Cardiac septum (tissue), 1 donor: ENCODE measurements at regions of chr7 and their contacts with region 1.

Region 1: GRCh38 chr7:36048141-36048901 is 104.7 kb upstream of the EEPD1 start:
- DNase-seq: no peak

Region 2: DNA sequence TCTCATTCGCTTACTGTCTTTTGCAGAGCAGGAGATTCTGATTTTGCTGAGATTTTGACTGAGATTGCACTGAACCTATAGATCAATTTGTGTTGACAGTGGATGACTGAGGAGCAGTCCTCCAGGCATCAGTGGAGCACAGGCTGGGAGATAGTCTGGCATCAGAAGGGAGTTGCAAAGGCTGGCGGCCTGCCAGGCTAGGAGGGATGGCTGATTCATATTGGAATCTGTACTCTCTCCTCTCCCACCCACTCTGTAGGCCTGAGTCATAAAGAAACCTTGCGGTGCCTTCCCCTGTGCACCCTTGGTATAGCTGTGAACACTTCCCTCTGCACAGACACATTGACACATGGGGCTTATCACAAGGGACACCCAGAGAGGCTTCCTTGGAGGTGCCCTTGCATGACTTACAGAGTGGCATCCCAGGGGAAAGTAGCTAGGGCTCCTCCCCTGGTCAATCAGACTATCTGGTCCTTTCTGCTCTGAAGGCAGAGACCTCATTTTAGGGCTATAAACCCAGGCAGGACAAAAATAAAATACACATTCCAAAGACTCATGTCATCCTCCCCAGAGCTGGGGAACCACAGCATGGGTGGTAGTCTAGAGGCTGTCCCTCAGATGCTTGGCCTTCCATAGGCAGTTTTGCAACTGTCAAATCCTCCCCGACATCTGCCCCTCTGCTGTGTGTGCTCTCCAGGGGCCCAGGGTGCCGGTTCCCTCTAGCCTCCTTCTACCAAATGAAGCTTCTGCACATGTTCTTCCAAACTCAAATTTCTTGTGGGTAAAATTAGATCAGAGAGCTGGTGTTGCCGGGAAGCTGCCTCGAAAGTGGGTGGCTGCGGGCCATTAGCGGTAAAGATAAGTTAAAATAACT is 67.4 kb after region 1 on chr7:
- intact Hi-C with region 1: loop called (anchors 2 kb)
- DNase-seq: no peak

Region 3: DNA sequence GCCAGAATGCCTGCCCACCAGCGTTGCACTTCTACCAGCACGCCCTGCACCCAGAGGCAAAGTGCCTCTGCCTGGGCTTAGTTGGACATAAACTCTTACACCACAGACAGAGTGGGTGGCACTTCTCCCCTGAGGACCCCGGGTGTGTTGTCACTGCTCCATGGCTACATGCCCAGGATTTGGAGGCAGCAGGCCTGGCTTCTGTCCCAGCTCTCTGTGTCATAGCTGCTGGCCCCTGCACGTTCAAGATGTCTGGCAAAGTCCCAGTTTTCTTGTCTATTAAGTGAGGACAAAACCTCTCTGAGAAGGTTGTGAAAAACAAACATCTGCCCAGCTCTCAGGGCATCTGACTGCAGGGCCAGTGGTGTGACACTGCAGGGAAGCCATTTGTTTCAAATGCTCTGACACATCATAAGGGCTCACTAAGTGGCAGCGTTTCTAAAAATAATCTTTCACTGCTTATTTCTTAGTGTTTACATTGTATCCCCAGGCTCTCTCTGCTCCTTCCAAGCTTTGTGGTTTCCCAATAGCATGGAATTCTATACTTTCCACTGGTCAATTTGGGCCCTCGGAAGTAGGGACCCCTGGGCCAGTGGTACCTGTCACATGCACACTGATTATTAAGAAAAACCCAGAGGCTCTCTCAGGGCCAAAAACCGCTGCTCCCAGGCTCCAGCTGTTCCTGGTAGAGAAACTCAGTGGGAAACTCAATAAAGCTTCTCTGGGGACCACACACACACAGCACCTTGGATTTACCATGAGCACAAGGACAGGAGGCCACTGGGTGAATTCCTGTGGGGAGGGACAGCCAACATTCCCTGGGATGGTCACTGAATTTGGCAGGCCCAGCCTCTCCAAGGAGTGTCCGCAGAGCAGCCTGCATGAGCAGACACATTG is 255.1 kb after region 1 on chr7:
- intact Hi-C with region 1: loop called (anchors 5 kb)
- DNase-seq: peak; percentile 89